Left colon (tissue), 2 donors: ENCODE measurements at regions of chr3 and their contacts with region 1.

Region 1: GRCh38 chr3:57221883-57222282 is 5.6 kb upstream of the APPL1 start:
- DNase-seq: no peak
- ATAC-seq: no peak

Region 2: DNA sequence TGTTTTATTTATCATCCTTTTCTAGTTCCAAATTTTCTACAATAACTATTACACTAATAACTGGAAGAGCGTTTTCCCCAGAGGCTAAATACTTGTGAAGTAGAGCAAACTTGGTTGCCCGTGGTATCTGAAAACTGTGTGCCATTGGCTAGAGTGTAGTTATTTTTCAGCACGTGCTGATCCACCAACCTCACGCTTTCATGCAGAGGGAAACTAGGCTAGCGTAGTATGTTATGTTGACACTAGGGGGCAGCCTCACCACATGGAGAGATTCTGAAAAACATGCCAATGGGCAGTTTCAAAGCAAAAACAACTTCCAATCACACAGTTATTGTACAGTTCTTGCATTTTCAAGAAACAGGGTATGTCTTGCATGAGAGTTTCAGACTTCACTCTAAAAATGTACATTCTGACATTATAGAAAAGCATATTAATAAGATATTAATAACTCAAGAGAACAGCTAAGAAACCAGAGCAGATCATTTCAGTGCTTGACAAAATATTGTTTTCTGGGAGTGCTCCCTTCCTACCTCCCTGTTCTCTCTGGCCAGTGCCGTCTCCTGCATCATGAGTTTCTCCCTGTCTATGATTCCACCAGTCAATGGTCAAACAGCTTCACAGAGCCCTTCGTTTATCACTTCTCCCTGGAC is 121.7 kb before region 1 on chr3:
- intact Hi-C with region 1: loop called in 1 of 2 experiments (anchors 5 kb)
- DNase-seq: peak; percentile 40 to 69
- ATAC-seq: peak; percentile 84